ENCODE measurements at regions of chr2 and their contacts with region 1.

Region 1: DNA sequence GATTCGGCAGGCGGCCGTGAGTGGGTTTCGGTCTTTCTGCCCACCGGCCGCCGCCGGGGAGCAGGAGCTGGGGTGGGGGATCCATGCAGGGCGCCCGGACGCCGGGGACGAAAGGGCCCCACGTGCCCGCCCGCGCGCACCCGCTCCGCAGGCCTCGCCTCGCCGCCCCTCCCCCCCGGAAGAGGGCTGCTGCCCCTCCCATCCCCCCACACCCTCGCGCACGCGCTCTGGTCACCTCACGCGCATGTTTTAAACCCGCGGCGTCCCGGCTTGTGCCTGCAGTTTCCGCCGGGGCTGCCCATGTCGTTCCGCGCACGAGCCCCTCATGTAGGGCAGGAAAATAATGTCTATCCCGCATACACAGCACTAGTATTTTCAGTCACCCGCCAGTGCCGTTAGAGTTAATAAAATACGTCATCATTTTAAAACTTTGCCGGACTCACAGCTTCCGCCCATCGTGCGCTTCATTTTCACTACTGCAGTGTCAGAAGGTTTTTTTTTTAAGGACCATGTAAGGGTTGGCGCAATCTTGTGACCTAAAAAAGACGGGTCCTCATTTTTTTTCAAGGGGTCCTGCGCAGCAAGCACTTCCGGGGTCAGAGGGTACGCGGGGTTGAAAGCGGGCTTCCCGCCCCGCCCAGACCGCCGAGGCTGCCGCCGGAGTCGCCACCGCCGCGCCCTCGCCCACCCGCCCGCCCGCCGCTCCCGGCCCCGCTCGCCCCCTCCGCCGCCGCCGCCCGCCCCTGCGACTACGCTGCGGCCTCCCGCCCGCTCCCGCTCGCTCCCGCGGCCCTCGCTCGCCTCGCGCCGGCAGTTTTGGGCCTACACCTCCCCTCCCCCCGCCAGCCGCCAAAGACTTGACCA is at the start of gene PCBP1:
- DNase-seq: peak; percentile 97 to 99 (median 97)
- ATAC-seq: peak; percentile 82 to 87 (median 84)
- H3K4me3 ChIP-seq: peak within 1 kb of the TSS; percentile 62 to 97 (median 82)
- H3K27ac ChIP-seq: peak within 1 kb of the TSS; percentile 91 to 100 (median 100)
- H3K4me1 ChIP-seq: peaks cover 0 to 66% (median 41%) of the 10 kb centered on the region in 12 donors
- H3K27me3 ChIP-seq: no peaks in the 10 kb centered on the region
- CTCF ChIP-seq: no peak
- POLR2A ChIP-seq: peak in 1 of 2 donors; percentile 71
- total RNA-seq, gene PCBP1: 106 to 274 (median 199) TPM

Region 2: GRCh38 chr2:69914170-69914960 is 172.7 kb before region 1 on chr2:
- intact Hi-C with region 1: loop called in 6 of 10 experiments (anchors 1 to 5 kb)
- DNase-seq: peak; percentile 98 to 100 (median 100)
- ATAC-seq: peak; percentile 95 to 98 (median 97)
- H3K4me3 ChIP-seq: peak overlapping the region; percentile 49 to 88 (median 80)
- H3K27ac ChIP-seq: peak overlapping the region; percentile 71 to 99 (median 96)
- H3K4me1 ChIP-seq: peaks cover 0 to 56% (median 14%) of the 10 kb centered on the region in 12 donors
- H3K27me3 ChIP-seq: no peaks in the 10 kb centered on the region
- CTCF ChIP-seq: peak in 7 of 12 donors; percentile 12 to 51 (median 40)
- POLR2A ChIP-seq: peak; percentile 62 to 75

Region 3: GRCh38 chr2:70124983-70125480 is 38.0 kb after region 1 on chr2:
- intact Hi-C with region 1: loop called in 8 of 10 experiments (anchors 1 to 5 kb)
- DNase-seq: peak; percentile 69 to 79 (median 78)
- ATAC-seq: peak; percentile 45 to 67 (median 65)
- H3K4me3 ChIP-seq: peak overlapping the region; percentile 21 to 76 (median 62)
- H3K27ac ChIP-seq: peak overlapping the region; percentile 97 to 100 (median 99)
- H3K4me1 ChIP-seq: peaks cover 6 to 65% (median 26%) of the 10 kb centered on the region in 12 donors
- H3K27me3 ChIP-seq: no peaks in the 10 kb centered on the region
- CTCF ChIP-seq: peak in 1 of 12 donors; percentile 5
- POLR2A ChIP-seq: peak in 1 of 2 donors; percentile 32

Region 4: DNA sequence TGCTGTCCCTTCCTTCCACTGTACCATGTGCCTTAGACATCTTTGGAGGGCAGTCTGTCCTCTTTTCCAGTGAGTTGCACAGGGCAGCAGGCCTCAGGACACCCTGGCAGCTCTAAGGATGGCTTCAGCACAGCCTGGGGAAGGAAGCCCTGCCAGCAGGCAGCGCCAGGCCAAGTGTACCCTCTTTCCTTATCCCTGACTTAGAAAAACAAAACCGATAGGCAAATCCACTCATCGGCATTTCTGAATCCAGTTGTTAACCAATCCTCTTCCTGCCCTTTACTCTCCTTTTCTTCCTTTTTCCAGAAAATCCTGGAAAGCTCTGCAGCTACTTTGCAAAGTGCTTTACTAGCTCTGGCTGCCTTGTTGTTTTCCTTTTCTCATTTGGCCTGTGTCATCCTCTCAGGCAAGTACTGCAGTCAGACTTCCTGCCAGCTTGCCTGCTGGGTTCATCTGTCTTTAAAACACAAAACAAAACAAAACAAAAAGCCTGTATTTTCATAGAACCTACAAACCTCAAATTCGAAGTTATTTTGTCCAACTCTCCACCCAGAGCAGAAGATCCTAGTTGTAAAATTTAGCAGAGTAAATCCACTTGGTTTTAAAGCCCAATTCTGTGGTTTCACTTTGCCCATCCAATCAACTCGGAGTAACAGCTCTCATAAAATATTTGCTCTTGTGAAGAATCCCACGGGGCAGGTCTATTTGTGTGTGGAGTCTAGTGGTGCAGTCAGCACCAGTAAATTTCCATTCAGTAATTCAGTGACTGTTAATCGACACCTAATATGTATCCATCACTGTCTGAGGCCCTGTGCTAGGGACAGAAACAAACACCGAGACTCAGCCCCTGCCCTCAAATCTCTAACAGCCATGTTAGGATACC is 45.4 kb after region 1 on chr2:
- intact Hi-C with region 1: loop called in 3 of 10 experiments (anchors 2 to 5 kb)
- DNase-seq: peak; percentile 48 to 71 (median 61)
- ATAC-seq: peak; percentile 74 to 82 (median 79)
- H3K4me3 ChIP-seq: peak overlapping the region in 10 of 12 donors; percentile 23 to 49 (median 42)
- H3K27ac ChIP-seq: peak overlapping the region; percentile 82 to 95 (median 91)
- H3K4me1 ChIP-seq: peaks cover 10 to 77% (median 46%) of the 10 kb centered on the region in 12 donors
- H3K27me3 ChIP-seq: no peaks in the 10 kb centered on the region
- CTCF ChIP-seq: peak in 1 of 12 donors; percentile 6
- POLR2A ChIP-seq: peak in 1 of 2 donors; percentile 29

Region 5: GRCh38 chr2:70142590-70143313 is 55.7 kb after region 1 on chr2:
- intact Hi-C with region 1: loop called (anchors 1 to 5 kb)
- DNase-seq: peak; percentile 99 to 100 (median 99)
- ATAC-seq: peak; percentile 90 to 91 (median 90)
- H3K4me3 ChIP-seq: peak overlapping the region in 11 of 12 donors; percentile 26 to 92 (median 73)
- H3K27ac ChIP-seq: peak overlapping the region; percentile 94 to 100 (median 98)
- H3K4me1 ChIP-seq: peaks cover 2 to 35% (median 20%) of the 10 kb centered on the region in 12 donors
- H3K27me3 ChIP-seq: no peaks in the 10 kb centered on the region
- CTCF ChIP-seq: peak; percentile 91 to 99 (median 97)
- POLR2A ChIP-seq: peak in 1 of 2 donors; percentile 47

Region 6: DNA sequence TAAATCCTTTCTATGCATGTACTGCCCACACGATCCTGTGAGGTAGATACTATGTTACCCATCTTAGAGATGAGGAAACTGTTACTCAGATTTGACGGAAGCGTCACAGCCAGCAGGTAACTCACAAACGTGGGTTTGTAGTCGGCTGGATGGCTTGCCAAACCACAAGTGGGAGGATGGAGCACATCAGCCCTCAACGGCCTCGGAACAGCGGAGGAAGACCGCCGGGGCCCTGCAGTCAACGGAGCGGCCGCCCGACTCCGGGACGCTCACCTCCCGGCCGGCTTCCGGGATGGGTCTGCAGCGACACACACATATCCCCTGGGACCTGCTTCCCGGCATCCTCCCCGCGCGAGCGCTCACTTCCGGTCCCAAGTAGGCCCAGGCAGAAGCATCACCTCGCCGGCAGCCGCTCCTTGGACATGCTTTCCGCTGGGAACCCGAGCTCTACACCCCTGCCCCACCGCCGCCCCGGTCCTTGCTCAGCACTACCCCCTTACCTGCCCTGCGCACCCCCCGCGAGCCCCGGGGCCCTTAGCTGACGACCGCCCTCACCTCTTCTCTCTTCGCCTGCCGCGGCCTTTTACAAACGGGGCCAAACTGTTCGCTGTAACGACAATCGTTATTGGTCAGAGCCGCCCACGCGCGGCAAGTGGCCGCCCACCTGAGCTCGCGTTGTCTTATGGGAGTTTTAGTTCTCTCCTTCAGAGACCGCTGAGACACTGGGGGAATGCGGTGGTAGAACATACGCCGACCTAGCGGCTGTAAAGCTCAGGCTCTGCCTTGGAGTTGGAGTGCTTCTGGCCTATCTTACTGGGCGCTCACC is 103.6 kb after region 1 on chr2 and contains the start of gene C2orf42:
- intact Hi-C with region 1: loop called in 2 of 10 experiments (anchors 2 kb)
- DNase-seq: peak; percentile 96 to 97 (median 97)
- ATAC-seq: peak; percentile 96 to 98 (median 98)
- H3K4me3 ChIP-seq: peak within 1 kb of the TSS; percentile 48 to 99 (median 80)
- H3K27ac ChIP-seq: peak within 1 kb of the TSS; percentile 87 to 98 (median 94)
- H3K4me1 ChIP-seq: peaks cover 0 to 13% (median 4%) of the 10 kb centered on the region in 12 donors
- H3K27me3 ChIP-seq: no peaks in the 10 kb centered on the region
- CTCF ChIP-seq: peak in 2 of 12 donors; percentile 19 to 33
- POLR2A ChIP-seq: peak in 1 of 2 donors; percentile 90
- total RNA-seq, gene C2orf42: 6.2 to 14.9 (median 10.9) TPM

Region 7: GRCh38 chr2:70248181-70248847 is 161.2 kb after region 1 on chr2 and contains the start of gene TIA1:
- intact Hi-C with region 1: loop called in 1 of 10 experiments (anchors 5 kb)
- DNase-seq: peak; percentile 98 to 99 (median 99)
- ATAC-seq: peak; percentile 98 to 99 (median 98)
- H3K4me3 ChIP-seq: peak within 1 kb of the TSS; percentile 52 to 98 (median 82)
- H3K27ac ChIP-seq: peak within 1 kb of the TSS; percentile 91 to 99 (median 96)
- H3K4me1 ChIP-seq: peaks cover 2 to 44% (median 33%) of the 10 kb centered on the region in 12 donors
- H3K27me3 ChIP-seq: no peaks in the 10 kb centered on the region
- CTCF ChIP-seq: no peak
- POLR2A ChIP-seq: peak; percentile 23 to 86
- total RNA-seq, gene TIA1: 26.1 to 53.0 (median 42.1) TPM

Measured in heart left ventricle (tissue), 16 donors.